Breast epithelium (tissue), 4 donors: ENCODE measurements at regions of chr6 and their contacts with region 1.

Region 1: DNA sequence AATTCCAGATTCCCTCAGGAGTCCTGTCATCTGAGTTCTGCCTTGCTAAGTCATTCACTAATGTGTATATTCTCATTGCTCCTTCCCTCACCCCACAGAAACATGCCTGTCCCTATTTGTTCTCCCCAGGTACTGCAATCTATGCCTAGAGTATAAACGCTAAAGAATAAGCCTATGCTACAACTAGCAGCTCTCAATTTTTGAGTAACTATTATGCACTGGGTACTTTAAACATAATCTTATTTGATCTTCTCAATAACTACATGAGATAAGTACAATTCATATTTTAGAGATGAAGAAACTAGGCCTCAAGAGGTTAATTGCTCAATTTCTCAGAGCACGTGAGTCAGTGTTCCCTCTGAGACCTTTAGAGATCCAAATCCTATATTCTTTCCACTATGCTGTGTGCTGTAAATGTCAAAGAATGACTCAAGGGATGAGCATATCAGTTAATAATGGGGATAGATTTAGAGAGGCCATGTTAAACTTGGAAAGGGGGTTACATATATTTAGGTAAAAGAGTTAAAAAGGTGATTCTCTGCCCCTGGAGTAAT is 423.8 kb upstream of the ADGRB3 start:
- DNase-seq: no peak
- H3K4me3 ChIP-seq: no peak overlapping the region
- H3K27ac ChIP-seq: no peak overlapping the region
- H3K4me1 ChIP-seq: no peaks in the 10 kb centered on the region
- H3K27me3 ChIP-seq: no peaks in the 10 kb centered on the region
- CTCF ChIP-seq: no peak
- POLR2A ChIP-seq: no peak

Region 2: GRCh38 chr6:66937180-66937579 is 1274.1 kb before region 1 on chr6:
- intact Hi-C with region 1: loop called (anchors 5 kb)
- DNase-seq: no peak
- H3K4me3 ChIP-seq: no peak overlapping the region
- H3K27ac ChIP-seq: no peak overlapping the region
- H3K4me1 ChIP-seq: no peaks in the 10 kb centered on the region
- H3K27me3 ChIP-seq: no peaks in the 10 kb centered on the region
- CTCF ChIP-seq: no peak
- POLR2A ChIP-seq: no peak

Region 3: GRCh38 chr6:68186870-68187269 is 24.4 kb before region 1 on chr6:
- intact Hi-C with region 1: loop called (anchors 2 kb)
- DNase-seq: no peak
- H3K4me3 ChIP-seq: no peak overlapping the region
- H3K27ac ChIP-seq: no peak overlapping the region
- H3K4me1 ChIP-seq: no peaks in the 10 kb centered on the region
- H3K27me3 ChIP-seq: no peaks in the 10 kb centered on the region
- CTCF ChIP-seq: no peak
- POLR2A ChIP-seq: no peak